ENCODE measurements at regions of chr2 and their contacts with region 1.

Region 1: GRCh38 chr2:106582148-106583143 is 95.3 kb downstream of the CD8B2 start:
- H3K4me3 Mint-ChIP-seq: peak overlapping the region; percentile 70
- H3K27ac Mint-ChIP-seq: peak overlapping the region; percentile 1
- H3K4me1 Mint-ChIP-seq: peaks cover 28% of the 10 kb centered on the region
- H3K27me3 Mint-ChIP-seq: peaks cover 56% of the 10 kb centered on the region

Region 2: GRCh38 chr2:106104332-106105062 is 477.9 kb before region 1 on chr2:
- intact Hi-C with region 1: loop called (anchors 2 kb)
- H3K4me3 Mint-ChIP-seq: no peak overlapping the region
- H3K27ac Mint-ChIP-seq: no peak overlapping the region
- H3K4me1 Mint-ChIP-seq: no peaks in the 10 kb centered on the region
- H3K27me3 Mint-ChIP-seq: no peaks in the 10 kb centered on the region

Region 3: DNA sequence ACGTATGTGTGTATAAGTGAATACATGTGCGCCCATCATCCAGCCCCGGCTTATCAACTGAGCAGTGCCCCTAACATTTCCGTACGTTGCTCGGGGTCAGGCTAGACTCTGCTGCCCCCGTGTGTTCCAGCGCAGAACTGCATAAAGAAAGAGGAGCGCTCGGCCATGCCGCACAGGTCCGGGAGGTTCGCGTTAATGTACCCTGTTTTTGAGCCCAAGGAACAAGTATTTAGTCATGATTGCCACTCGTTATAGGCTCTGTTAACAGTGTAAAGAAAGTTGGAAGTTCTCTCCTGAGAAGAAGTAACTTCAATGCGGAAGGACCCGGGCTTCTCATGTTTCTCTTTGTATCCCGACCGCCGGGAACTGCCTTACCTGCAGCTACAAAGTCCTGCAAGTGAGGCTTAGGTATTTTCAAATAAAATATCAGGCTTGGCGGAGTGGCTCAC is 39.6 kb before region 1 on chr2:
- intact Hi-C with region 1: loop called (anchors 2 kb)
- H3K4me3 Mint-ChIP-seq: peak overlapping the region; percentile 54
- H3K27ac Mint-ChIP-seq: peak overlapping the region; percentile 76
- H3K4me1 Mint-ChIP-seq: peaks cover 43% of the 10 kb centered on the region
- H3K27me3 Mint-ChIP-seq: peaks cover 14% of the 10 kb centered on the region